HCT116 (cell line): ENCODE measurements at regions of chr16 and their contacts with region 1.

Region 1: DNA sequence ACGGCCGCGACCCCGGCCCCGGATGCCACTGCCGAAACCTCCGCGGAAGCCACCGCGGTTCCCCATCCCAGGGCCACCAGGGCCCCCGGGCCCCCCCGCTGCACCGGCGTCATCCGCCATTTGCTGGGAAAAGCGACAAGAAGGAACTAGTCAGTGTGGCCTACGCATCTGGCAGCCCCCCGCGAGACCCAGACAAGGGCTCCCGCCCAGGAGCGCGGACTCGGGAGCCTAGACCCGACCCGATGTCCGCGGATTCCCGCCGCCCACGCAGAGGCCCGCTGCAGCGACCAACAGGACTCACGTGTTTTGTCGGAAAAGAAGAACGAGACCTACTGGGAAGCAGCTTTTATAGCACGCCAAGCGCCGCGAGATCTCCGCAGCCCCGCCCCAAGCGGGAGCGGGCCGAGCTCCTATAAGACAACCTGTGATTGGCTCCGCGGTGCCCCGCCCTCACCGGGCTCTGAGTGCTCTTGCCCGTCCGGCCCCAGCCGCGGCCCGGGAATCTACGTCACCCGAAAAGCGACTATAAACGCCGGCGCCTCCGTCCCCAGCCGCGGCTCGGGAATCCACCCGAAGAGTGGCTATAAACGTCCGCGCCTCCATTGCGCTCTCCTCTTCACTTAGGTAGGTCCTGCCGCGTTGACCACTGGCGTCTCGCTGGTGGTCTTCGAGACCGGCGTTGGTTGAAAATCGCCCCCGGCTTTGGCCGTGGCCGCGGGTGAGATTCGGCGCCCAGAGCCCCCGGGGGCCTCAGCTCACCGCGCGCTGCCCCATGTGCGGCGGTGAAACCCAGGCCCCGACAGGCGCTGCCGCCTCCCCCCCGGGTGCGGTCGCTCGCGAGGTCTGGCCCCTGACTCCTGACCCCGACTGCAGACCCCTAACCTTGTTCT is at the start of gene RPS2:
- DNase-seq: peak; percentile 95
- ATAC-seq: peak; percentile 60
- H3K4me3 ChIP-seq: peak within 1 kb of the TSS; percentile 65 to 73
- H3K27ac ChIP-seq: peak within 1 kb of the TSS; percentile 94
- H3K4me1 ChIP-seq: peaks cover 5 to 38% of the 10 kb centered on the region in 2 experiments; a peak in 3 of 4 replicates
- H3K27me3 ChIP-seq: no peaks in the 10 kb centered on the region
- CTCF ChIP-seq: 0 out of 6 replicates have a peak, but pooled peaks of 1 of the 3 experiments have one; percentile 2
- POLR2A ChIP-seq: peak; percentile 99
- RAD21 ChIP-seq: no peak
- total RNA-seq, gene RPS2: 6,265 TPM

Region 2: DNA sequence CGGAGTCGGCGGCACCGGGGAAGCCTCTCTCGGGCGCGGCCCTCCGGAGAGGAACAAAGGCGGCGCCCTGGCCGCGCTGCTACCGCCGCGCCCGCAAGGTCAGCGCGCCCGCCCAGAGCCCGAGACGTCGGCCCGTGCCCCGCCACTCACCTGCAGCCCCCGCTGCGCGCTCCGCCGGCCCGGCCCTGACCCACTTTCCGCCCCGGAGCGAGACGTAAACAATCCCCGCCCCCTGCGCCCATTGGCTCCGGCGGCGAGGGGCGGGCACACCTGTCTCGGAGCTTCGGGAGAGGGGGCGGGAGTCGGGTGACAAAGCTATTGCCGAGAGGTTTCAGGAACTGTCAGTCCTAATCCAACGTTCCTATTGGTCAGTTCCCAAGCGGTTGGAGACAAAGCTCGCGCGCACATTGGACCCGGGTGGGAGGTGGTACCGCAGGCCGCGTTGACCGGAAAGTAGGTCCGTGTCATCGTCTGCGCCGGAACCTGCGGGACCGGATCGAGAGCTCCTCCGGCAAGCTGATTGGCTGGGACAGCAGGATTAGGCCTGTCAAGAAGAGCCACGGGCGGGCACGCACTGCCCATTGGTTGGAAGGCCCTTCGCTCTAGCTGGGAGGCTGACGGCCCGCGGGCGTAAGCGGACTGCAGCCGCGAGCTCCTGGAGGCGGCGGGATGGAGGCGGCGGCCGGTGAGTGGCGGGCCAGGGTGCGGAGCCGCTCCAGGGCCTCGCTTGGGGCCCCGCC is 182.2 kb before region 1 on chr16 and contains the starts of genes NUBP2 and SPSB3:
- CTCF ChIA-PET with region 1: no interaction called
- POLR2A ChIA-PET with region 1: interaction called, 10 read pairs
- RAD21 ChIA-PET with region 1: no interaction called
- intact Hi-C with region 1: no loop called
- DNase-seq: peak; percentile 100
- ATAC-seq: peak; percentile 84
- H3K4me3 ChIP-seq: peak within 1 kb of the TSS; percentile 80 to 88
- H3K27ac ChIP-seq: peak within 1 kb of the TSS; percentile 78
- H3K4me1 ChIP-seq: peaks cover 0 to 22% of the 10 kb centered on the region in 2 experiments; a peak in 3 of 4 replicates
- H3K27me3 ChIP-seq: no peaks in the 10 kb centered on the region
- CTCF ChIP-seq: no peak
- POLR2A ChIP-seq: no peak
- RAD21 ChIP-seq: no peak
- total RNA-seq, gene NUBP2: 103 TPM
- total RNA-seq, gene SPSB3: 31.6 TPM

Region 3: DNA sequence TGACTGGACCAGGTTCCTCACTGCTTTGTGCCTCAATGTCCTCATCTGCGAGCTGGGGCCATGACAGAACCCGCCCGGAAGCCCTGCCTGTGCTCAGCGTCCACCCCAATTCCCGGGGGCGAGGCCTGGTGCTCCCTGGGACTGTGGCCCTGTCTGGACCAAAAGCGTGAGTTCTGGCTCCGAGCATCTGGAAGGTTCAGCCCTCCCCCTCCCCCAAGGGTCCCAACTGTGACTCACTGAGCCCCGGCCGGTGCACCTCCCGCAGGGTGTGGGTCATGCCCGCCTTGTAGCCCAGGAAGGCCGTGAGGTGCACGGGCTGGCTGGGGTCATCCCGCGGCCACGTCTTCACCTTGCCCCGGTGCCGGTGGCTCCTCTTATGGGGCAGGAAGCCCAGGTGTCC is 11.0 kb before region 1 on chr16:
- CTCF ChIA-PET with region 1: no interaction called
- POLR2A ChIA-PET with region 1: interaction called, 17 read pairs
- RAD21 ChIA-PET with region 1: no interaction called
- intact Hi-C with region 1: no loop called
- DNase-seq: no peak
- ATAC-seq: no peak
- H3K4me3 ChIP-seq: no peak overlapping the region
- H3K27ac ChIP-seq: no peak overlapping the region
- H3K4me1 ChIP-seq: peaks cover 2 to 4% of the 10 kb centered on the region in 2 experiments
- H3K27me3 ChIP-seq: no peaks in the 10 kb centered on the region
- CTCF ChIP-seq: no peak
- POLR2A ChIP-seq: no peak
- RAD21 ChIP-seq: no peak

Region 4: GRCh38 chr16:1983544-1984346 is 19.0 kb after region 1 on chr16 and contains the start of gene GFER:
- CTCF ChIA-PET with region 1: interaction called, 3 read pairs
- POLR2A ChIA-PET with region 1: interaction called, 104 read pairs
- RAD21 ChIA-PET with region 1: no interaction called
- intact Hi-C with region 1: no loop called
- DNase-seq: peak; percentile 85
- ATAC-seq: peak; percentile 74
- H3K4me3 ChIP-seq: peak within 1 kb of the TSS; percentile 84 to 97
- H3K27ac ChIP-seq: peak within 1 kb of the TSS; percentile 84
- H3K4me1 ChIP-seq: peaks cover 45 to 62% of the 10 kb centered on the region in 2 experiments
- H3K27me3 ChIP-seq: no peaks in the 10 kb centered on the region
- CTCF ChIP-seq: peak in 2 of 3 experiments; percentile 14 to 20; a peak in 3 of 6 replicates
- POLR2A ChIP-seq: no peak
- RAD21 ChIP-seq: no peak
- total RNA-seq, gene GFER: 47.3 TPM

Region 5: GRCh38 chr16:2003827-2004641 is 39.3 kb after region 1 on chr16:
- CTCF ChIA-PET with region 1: no interaction called
- POLR2A ChIA-PET with region 1: interaction called, 10 read pairs
- RAD21 ChIA-PET with region 1: interaction called in 1 of 2 experiments, 5 read pairs
- intact Hi-C with region 1: no loop called
- DNase-seq: peak; percentile 87
- ATAC-seq: peak; percentile 91
- H3K4me3 ChIP-seq: no peak overlapping the region
- H3K27ac ChIP-seq: peak overlapping the region; percentile 62; the same call in 1 of the 2 replicates
- H3K4me1 ChIP-seq: peaks cover 23 to 50% of the 10 kb centered on the region in 2 experiments
- H3K27me3 ChIP-seq: no peaks in the 10 kb centered on the region
- CTCF ChIP-seq: peak; percentile 93 to 99 (median 99)
- POLR2A ChIP-seq: no peak
- RAD21 ChIP-seq: peak; percentile 77

Region 6: DNA sequence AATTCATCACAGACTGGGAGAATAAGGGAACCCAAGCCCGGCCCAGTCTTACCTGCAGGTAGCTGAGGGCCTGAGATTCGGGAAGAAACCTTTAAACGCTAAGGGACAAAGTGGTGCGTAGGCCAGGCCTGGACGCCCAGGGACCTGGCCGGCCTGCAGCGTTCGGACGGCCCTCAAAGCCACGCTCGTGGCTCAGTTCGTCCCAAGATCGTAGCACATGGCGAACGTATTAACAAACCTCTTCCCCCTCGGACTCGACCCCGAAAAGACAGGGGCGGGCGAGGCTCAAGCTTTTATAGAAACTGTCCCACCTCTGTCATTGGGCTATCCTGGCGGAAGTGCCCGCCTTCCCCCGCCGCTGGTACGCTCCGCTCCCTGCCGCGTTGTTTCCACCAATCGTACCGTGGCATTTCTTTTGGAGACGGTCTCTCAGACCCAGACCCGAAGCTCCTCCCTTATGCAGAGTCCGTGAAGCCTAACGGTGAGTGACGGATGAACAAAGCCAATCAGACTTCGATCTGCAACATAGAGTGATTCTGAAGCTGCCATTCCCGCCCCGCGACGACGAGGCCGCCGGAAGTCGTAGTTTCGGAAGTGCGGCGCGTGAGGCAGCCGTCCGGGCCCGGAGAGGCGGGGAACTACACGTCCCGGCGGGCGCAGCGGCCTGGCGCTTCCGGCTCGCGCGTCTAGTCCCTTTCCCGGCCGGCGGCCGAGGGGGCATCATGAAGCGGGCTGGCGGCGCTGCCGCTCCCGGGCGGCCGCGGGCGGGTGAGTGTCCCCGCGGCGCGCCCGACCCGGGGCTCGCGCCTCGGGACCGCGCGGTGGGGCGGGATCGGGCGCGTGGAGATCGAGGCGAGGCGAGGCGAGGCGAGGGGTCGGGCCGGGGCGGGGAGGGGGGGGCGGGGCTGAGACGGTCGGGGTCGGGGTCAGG is 190.6 kb after region 1 on chr16 and contains the start of gene TRAF7:
- CTCF ChIA-PET with region 1: no interaction called
- POLR2A ChIA-PET with region 1: interaction called, 12 read pairs
- RAD21 ChIA-PET with region 1: no interaction called
- intact Hi-C with region 1: no loop called
- DNase-seq: peak; percentile 100
- ATAC-seq: peak; percentile 74
- H3K4me3 ChIP-seq: peak within 1 kb of the TSS; percentile 98 to 100
- H3K27ac ChIP-seq: peak within 1 kb of the TSS; percentile 84
- H3K4me1 ChIP-seq: peaks cover 48 to 74% of the 10 kb centered on the region in 2 experiments
- H3K27me3 ChIP-seq: no peaks in the 10 kb centered on the region
- CTCF ChIP-seq: no peak
- POLR2A ChIP-seq: peak; percentile 99
- RAD21 ChIP-seq: no peak
- total RNA-seq, gene TRAF7: 160 TPM